Natural killer cell (primary cell): ENCODE measurements at regions of chr1 and their contacts with region 1.

Region 1: GRCh38 chr1:247131236-247131635 is 27.1 kb upstream of the ZNF669 start:
- DNase-seq: no peak
- ATAC-seq: no peak
- H3K4me3 ChIP-seq: no peak overlapping the region
- H3K4me3 Mint-ChIP-seq: no peak overlapping the region
- H3K27ac ChIP-seq: no peak overlapping the region
- H3K27ac Mint-ChIP-seq: no peak overlapping the region
- H3K4me1 ChIP-seq: peaks cover 4% of the 10 kb centered on the region
- H3K4me1 Mint-ChIP-seq: peaks cover 8 to 9% of the 10 kb centered on the region in 2 donors
- H3K27me3 ChIP-seq: no peaks in the 10 kb centered on the region
- H3K27me3 Mint-ChIP-seq: no peaks in the 10 kb centered on the region
- CTCF ChIP-seq: no peak

Region 2: DNA sequence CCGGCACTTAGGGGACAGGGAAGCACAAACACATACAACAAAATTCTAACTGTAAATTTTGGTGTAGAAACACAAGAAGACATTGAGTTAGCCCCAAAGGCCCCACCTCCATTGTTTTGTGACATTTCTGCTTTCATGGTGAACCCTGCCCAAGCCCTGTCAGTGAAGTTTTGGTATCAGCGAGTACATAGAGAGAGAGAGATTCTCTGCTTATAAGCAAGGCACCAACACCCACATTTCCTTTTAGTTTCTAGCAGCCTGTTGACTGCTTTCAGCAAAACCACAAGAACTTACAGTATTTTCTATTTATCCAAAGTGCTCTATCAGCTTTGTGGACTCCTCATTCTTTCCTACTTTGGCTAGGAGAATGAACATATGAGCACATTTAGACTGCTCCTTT is 16.5 kb after region 1 on chr1:
- intact Hi-C with region 1: loop called (anchors 2 kb)
- DNase-seq: no peak
- ATAC-seq: no peak
- H3K4me3 ChIP-seq: no peak overlapping the region
- H3K4me3 Mint-ChIP-seq: no peak overlapping the region
- H3K27ac ChIP-seq: no peak overlapping the region
- H3K27ac Mint-ChIP-seq: no peak overlapping the region
- H3K4me1 ChIP-seq: no peaks in the 10 kb centered on the region
- H3K4me1 Mint-ChIP-seq: no peaks in the 10 kb centered on the region
- H3K27me3 ChIP-seq: no peaks in the 10 kb centered on the region
- H3K27me3 Mint-ChIP-seq: no peaks in the 10 kb centered on the region
- CTCF ChIP-seq: no peak

Region 3: DNA sequence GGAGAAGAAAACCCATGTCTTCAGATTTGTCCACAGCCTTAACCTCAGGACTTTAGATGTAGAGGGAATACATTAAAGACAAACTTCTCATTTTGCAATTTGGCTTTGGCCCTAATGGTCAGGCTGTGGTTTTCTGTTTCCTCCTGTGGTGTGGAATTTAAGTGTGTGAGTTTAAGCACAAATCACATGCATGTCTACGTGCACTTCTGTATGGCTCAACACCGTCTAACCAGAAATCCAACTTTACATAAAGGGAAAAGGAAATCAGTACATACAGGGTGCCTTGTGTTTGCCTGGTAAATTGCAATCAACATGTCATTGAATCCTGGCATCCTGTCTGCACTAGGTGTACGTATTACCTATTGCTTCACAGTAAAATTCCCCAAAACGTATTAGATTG is 41.8 kb after region 1 on chr1:
- intact Hi-C with region 1: loop called (anchors 2 kb)
- DNase-seq: peak in 1 of 2 donors; percentile 6
- ATAC-seq: no peak
- H3K4me3 ChIP-seq: no peak overlapping the region
- H3K4me3 Mint-ChIP-seq: peak overlapping the region; percentile 25
- H3K27ac ChIP-seq: no peak overlapping the region
- H3K27ac Mint-ChIP-seq: peak overlapping the region in 1 of 2 donors; percentile 45
- H3K4me1 ChIP-seq: peaks cover 13% of the 10 kb centered on the region
- H3K4me1 Mint-ChIP-seq: peaks cover 16 to 18% of the 10 kb centered on the region in 2 donors
- H3K27me3 ChIP-seq: no peaks in the 10 kb centered on the region
- H3K27me3 Mint-ChIP-seq: no peaks in the 10 kb centered on the region
- CTCF ChIP-seq: no peak